KBM-7 (cell line): ENCODE measurements at regions of chr14 and their contacts with region 1.

Region 1: GRCh38 chr14:64338616-64339316 is 44.6 kb upstream of the ESR2 start:
- DNase-seq: peak; percentile 99

Region 2: DNA sequence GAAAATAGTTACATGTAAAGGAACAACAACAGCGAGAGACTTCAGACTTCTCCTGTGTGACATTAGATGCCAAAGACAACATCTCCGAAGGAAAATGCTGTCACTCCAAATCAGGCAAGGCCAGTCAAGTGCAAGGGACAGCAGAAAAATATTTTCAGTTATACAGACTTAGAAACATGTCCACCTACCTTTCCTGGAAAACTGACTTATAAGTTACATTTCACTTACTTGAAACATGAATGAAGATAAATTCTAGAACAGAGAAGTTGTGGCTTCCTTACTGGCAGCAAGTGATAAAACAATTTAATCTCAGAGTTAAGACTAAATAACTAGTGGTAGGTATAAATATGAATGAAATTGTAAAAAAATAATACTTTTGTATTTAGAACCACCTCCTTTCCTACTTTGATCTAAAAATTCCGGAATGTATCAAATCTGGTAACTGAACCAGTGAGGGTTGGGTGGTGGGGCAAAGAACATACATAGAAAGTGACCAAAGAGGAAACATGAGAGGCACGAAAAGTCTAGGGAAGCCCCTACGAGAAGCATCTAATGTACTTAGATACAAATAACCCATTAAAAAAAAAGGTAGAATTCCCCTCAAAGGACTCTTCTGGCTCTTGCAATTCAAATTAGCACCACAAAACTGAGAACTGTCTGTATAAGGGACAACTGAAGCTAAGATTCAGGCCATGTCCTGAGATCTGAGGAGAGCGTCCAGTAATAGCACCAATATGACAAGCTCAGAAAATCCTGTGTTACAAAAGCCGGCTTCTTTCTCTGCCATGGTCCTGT is 70.6 kb after region 1 on chr14:
- in situ Hi-C with region 1: no loop called
- DNase-seq: no peak

Region 3: DNA sequence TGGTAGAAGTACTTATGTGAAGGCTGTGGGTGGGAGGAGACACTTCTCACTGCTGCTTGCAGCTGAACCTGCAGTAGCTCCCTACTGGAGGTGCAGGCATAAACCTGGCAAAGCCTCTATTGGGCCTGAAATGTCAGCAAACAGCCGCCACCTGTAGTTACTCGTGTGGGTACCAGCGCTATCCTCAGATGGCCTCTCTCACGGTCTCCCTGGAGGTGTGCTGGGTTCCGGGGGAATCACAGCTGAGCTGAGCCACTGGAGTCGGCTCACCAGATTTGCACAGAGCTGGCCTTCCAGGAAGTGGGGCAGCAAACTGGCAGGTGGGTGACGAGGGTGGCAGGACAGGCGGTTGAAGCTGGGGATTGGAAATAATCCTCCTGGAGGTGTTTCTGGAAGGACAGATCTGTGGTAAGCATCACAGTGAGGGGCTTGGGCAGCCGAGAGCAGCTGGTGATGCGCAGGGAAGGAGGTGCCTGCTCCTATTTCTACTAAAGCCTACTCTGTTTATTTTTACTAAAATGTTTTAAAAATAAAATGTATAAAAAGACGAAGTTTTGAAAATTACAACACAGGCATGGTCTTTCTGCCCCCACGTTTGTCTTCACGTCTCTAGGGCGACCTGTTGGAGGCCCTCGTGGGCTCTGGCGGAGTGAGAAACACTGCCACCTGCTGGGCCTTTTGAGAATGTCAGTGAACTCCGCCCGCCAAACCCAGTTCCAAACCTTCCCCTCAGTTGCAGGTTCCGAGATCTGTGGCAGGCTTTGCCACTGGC is 297.6 kb after region 1 on chr14:
- in situ Hi-C with region 1: loop called (anchors 25 kb)
- DNase-seq: peak; percentile 85